ENCODE measurements at regions of chr9 and their contacts with region 1.

Region 1: DNA sequence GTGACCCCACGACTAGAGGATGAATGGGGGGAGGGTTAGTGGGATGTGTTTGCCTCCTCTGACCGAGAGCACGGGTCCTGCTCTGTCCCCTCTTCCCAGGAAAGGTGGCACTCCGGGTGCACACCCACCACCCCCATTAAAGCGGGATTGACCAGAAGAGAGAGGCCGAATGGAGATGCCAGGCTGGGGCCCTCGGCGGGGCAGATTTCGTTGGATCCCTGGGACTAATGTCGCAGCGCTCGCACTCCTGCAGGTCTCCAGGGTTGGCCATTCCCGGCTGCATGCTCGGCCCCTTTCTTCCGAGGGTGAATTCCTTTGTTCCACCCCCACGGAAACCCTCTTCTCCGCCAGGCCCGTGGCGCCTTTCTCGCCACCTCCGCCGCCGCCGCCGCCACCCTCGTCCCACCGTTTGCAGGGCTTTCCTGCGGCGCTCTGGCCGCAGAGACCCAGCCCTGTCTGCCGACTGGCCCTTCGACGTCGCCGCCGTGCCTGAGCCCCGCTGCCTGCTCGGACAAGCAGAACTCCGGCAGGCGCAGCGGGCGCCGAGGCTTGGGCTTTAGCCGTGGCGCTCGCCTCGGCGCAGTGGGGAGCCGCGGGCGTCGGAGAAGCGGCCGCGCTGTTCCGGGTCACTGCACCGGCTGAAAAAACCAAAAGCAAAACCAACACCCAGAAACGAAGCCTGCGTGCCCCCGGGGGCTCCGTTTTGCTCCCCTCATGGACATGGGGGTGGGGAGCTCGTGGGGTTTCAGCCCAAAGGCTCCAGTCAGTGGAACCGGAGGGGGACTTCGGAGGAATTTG is 11.8 kb downstream of the LMX1B start:
- DNase-seq: no peak
- H3K4me3 Mint-ChIP-seq: peak overlapping the region; percentile 68
- H3K27ac Mint-ChIP-seq: no peak overlapping the region
- H3K4me1 Mint-ChIP-seq: no peaks in the 10 kb centered on the region
- H3K27me3 Mint-ChIP-seq: peaks cover 82% of the 10 kb centered on the region

Region 2: GRCh38 chr9:126558051-126558665 is 67.4 kb before region 1 on chr9:
- intact Hi-C with region 1: no loop called
- DNase-seq: peak; percentile 49
- H3K4me3 Mint-ChIP-seq: no peak overlapping the region
- H3K27ac Mint-ChIP-seq: no peak overlapping the region
- H3K4me1 Mint-ChIP-seq: no peaks in the 10 kb centered on the region
- H3K27me3 Mint-ChIP-seq: peaks cover 8% of the 10 kb centered on the region

Region 3: GRCh38 chr9:126611592-126612325 is 13.8 kb before region 1 on chr9:
- intact Hi-C with region 1: loop called (anchors 1 kb)
- DNase-seq: peak; percentile 58
- H3K4me3 Mint-ChIP-seq: no peak overlapping the region
- H3K27ac Mint-ChIP-seq: peak overlapping the region; percentile 55
- H3K4me1 Mint-ChIP-seq: peaks cover 8% of the 10 kb centered on the region
- H3K27me3 Mint-ChIP-seq: peaks cover 63% of the 10 kb centered on the region

Region 4: GRCh38 chr9:126676685-126677143 is 51.2 kb after region 1 on chr9:
- intact Hi-C with region 1: loop called (anchors 2 kb)
- DNase-seq: no peak
- H3K4me3 Mint-ChIP-seq: no peak overlapping the region
- H3K27ac Mint-ChIP-seq: no peak overlapping the region
- H3K4me1 Mint-ChIP-seq: peaks cover 5% of the 10 kb centered on the region
- H3K27me3 Mint-ChIP-seq: peaks cover 68% of the 10 kb centered on the region

Region 5: GRCh38 chr9:127349483-127350113 is 724.1 kb after region 1 on chr9:
- intact Hi-C with region 1: no loop called
- DNase-seq: no peak
- H3K4me3 Mint-ChIP-seq: no peak overlapping the region
- H3K27ac Mint-ChIP-seq: no peak overlapping the region
- H3K4me1 Mint-ChIP-seq: no peaks in the 10 kb centered on the region
- H3K27me3 Mint-ChIP-seq: peaks cover 21% of the 10 kb centered on the region